Esophagus squamous epithelium (tissue), 5 donors: ENCODE measurements at regions of chr11 and their contacts with region 1.

Region 1: DNA sequence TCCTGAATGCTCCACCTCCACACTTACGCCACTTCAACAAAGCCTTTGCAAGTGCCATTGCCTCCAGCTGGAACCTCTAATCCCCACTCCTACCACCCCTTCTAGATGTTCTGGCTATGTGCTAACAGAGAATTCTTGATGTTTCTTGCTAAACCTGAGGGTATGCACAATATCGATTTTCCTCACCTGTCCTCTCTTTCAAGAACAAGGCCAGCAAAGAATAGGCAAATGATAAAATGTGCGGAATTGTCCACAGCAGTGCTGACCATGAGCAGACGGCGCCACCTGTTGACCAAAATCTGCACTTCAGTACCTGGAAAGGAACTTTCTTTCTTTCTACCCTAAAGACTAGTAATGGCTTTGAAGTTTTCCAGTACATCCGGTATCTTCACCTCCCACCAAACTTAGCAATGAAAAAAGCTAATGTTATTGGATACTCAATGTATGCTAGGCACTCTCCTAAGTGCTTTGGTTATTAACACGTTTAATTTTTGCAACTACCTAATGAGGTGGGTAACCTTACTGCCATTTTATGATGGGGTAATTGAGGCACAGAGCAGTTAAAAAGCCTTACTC is 3.4 kb downstream of the TIMM10 start:
- DNase-seq: no peak
- H3K4me3 ChIP-seq: no peak overlapping the region
- H3K27ac ChIP-seq: no peak overlapping the region
- H3K4me1 ChIP-seq: peaks cover 6 to 23% (median 9%) of the 10 kb centered on the region in 3 donors
- H3K27me3 ChIP-seq: no peaks in the 10 kb centered on the region
- CTCF ChIP-seq: peak; percentile 85 to 94 (median 90)
- POLR2A ChIP-seq: no peak

Region 2: DNA sequence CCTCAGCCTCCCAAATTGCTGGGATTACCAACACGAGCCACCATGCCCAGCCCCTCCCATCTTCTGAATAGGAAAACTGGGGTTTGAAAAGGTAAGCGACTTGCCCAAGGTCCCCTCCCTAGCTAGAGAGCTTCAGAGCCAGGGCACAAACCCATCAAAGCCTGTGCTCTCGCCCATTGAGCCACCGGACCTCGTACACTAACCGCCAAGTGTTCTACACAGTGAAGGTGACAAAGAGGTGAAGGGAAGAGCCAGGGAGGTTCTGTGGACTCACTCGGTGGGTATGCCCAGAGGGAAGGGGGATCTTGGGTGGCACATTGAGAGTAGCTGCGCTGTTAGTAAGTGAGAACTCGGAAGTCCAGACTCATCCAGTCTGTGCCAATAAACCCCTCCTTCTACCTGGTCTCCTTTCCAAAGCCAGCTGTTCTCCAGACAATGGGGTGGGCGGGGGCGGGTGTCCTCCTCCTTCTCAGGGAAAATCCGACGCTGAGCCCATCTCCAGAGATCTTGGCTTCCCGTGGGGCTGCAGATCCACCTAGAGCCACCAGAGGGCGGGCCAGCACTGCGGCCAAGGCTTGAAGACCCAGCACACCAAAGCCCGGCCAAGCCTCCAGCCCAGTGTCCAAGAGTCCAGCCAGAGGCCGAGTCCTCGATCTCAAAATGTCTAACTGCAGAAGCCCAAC is 70.0 kb before region 1 on chr11:
- intact Hi-C with region 1: loop called (anchors 5 kb)
- DNase-seq: peak; percentile 24
- H3K4me3 ChIP-seq: peak overlapping the region in 1 of 4 donors; percentile 72
- H3K27ac ChIP-seq: no peak overlapping the region
- H3K4me1 ChIP-seq: peaks cover 37 to 46% (median 40%) of the 10 kb centered on the region in 3 donors
- H3K27me3 ChIP-seq: peaks cover 0 to 55% (median 3%) of the 10 kb centered on the region in 4 donors
- CTCF ChIP-seq: peak; percentile 93 to 99 (median 98)
- POLR2A ChIP-seq: no peak

Region 3: DNA sequence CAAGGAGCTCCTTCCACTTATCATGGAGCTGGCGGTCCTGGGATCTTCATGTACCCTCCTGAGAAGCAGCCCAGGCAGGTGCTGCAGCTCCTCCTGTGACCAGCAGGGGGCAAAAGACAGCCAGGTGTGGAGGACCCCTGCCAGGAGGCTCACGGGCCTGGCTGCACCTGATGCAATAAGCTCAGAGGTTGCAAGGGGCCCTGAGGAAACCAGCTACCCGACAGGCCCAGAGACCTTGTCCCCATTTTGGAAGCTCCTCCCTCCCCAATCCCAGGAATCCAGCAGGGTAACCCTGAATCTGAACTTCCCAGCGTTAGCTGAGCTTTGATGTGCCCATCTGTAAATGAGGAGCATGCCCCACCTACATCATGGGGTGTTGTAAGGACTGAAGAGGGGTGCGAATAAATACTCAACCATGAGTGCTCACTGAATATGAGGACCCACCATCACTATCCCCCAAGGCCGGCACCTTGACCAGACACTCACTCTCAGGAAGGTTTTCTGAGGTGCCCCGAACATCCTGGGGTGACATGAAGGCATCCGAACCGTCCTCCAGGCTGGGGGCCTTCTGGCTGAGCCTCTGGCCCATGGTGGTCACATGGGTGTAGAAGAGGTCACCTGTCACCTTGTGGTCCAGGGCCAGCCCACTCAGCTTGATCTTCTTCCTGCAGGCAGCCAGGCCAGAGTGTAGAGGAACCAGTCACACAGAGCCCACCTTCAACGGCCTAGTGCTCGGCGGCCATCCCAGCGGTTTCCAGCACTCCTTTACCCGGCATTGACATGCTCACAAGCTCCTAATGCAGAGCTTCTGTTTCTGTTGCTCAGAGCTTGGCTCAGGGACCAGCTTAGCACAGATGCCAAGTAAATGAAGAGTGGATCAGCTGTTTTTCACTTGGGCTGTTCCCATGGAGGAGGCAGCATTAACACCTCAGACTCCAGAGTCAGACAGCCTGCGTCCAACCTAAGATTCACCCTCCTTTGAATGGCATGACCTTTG is 33.3 kb before region 1 on chr11:
- intact Hi-C with region 1: loop called (anchors 5 kb)
- DNase-seq: no peak
- H3K4me3 ChIP-seq: no peak overlapping the region
- H3K27ac ChIP-seq: no peak overlapping the region
- H3K4me1 ChIP-seq: peaks cover 0 to 8% (median 1%) of the 10 kb centered on the region in 3 donors
- H3K27me3 ChIP-seq: no peaks in the 10 kb centered on the region
- CTCF ChIP-seq: peak; percentile 64 to 93 (median 86)
- POLR2A ChIP-seq: no peak

Region 4: GRCh38 chr11:57614234-57614772 is 87.2 kb after region 1 on chr11:
- intact Hi-C with region 1: no loop called
- DNase-seq: no peak
- H3K4me3 ChIP-seq: no peak overlapping the region
- H3K27ac ChIP-seq: no peak overlapping the region
- H3K4me1 ChIP-seq: peaks cover 0 to 12% (median 0%) of the 10 kb centered on the region in 3 donors
- H3K27me3 ChIP-seq: no peaks in the 10 kb centered on the region
- CTCF ChIP-seq: no peak
- POLR2A ChIP-seq: no peak